ENCODE measurements at regions of chr6 and their contacts with region 1.

Region 1: DNA sequence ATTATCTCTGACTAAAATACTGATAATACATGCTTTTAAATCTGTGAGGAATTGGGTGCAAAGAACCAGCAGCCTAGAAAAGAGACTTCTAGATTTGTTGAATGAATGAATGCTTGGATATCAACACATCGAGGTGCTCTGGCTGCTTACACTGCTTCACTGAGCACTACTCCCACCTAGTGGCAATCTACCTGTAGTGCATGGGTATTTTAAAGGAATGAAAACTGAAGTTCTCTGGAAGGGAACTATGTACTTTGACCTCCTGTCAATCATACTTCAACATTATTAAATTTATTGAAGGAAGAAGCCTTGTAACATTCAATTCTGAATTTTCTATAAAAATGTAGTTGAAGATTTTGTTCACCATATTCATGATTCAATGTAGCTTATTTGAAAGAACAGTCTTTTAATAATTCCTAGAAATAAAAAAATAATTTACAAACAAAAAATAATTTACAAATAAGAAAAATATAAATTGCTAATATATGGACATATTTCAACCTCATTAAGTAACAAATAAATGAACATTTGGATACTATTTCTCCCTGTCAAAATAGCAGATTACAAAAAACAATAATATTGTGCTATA is 111.2 kb upstream of the MMS22L start:
- DNase-seq: peak; percentile 20
- ATAC-seq: peak; percentile 81
- H3K4me3 ChIP-seq: no peak overlapping the region
- H3K27ac ChIP-seq: no peak overlapping the region
- H3K4me1 ChIP-seq: no peaks in the 10 kb centered on the region
- H3K27me3 ChIP-seq: no peaks in the 10 kb centered on the region
- CTCF ChIP-seq: peak; percentile 82 to 89 (median 82)
- EP300 ChIP-seq: no peak
- POLR2A ChIP-seq: no peak
- RAD21 ChIP-seq: peak; percentile 96

Region 2: DNA sequence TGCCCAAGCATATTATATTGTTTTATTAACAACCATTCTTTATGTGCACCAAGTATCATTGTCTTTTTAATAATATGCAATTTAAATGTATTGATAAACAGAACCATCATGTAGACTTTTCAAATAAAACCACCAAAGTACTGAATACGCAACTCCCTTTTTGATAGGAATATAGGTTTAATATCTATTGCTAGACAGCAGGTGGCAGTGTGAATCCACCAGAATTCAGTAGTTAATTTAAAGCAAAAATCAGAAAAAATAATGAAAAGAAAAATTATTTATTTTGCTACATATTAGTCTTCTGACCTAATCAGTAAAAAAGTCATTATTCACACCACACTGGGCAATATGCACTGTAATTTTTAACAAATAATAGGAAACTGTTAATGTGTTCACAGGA is 326.0 kb before region 1 on chr6:
- CTCF ChIA-PET with region 1: interaction called, 10 read pairs
- POLR2A ChIA-PET with region 1: no interaction called
- RAD21 ChIA-PET with region 1: interaction called, 3 read pairs
- SMC1A ChIA-PET with region 1: interaction called, 4 read pairs
- in situ Hi-C with region 1: loop called (anchors 5 kb)
- intact Hi-C with region 1: loop called (anchors 1 kb)
- DNase-seq: no peak
- ATAC-seq: 0 out of 3 replicates have a peak, but pooled peaks have one; percentile 33
- H3K4me3 ChIP-seq: no peak overlapping the region
- H3K27ac ChIP-seq: no peak overlapping the region
- H3K4me1 ChIP-seq: no peaks in the 10 kb centered on the region
- H3K27me3 ChIP-seq: no peaks in the 10 kb centered on the region
- CTCF ChIP-seq: peak in 2 of 3 experiments; percentile 45 to 49; a peak in 4 of 6 replicates
- EP300 ChIP-seq: no peak
- POLR2A ChIP-seq: no peak
- RAD21 ChIP-seq: peak; percentile 64

Region 3: DNA sequence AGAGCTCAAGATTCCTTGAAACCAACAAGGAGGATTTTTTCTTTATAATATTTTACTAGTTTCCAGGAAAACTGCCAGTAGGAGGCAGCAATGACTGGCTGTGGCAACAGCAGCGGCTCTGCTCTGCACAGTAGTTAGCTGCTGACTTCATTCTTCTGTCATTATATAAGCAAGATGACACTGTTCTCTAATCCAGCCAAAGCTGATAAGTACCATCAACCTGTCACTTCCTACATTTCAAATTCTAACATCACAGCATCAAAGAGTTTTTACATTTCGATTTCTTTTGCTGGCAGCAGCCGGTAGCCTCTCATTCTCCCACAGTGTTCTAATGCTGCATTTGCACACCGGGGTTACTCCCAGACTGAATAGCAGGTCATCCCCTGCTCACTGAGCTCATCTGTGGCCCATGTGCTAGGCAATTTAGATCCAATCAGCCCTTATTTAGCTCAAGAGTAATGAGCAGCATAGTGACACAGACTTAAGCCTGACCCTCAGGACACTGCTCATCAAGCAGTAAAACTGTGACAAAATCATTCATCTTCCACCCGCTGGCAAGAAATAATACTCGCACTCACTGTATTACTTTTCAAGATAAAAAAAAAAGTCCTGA is 179.0 kb before region 1 on chr6:
- CTCF ChIA-PET with region 1: interaction called, 14 read pairs
- POLR2A ChIA-PET with region 1: no interaction called
- RAD21 ChIA-PET with region 1: interaction called, 9 read pairs
- SMC1A ChIA-PET with region 1: interaction called, 3 read pairs
- in situ Hi-C with region 1: no loop called
- intact Hi-C with region 1: no loop called
- DNase-seq: no peak
- ATAC-seq: peak; percentile 34; the same call in 1 of the 3 replicates
- H3K4me3 ChIP-seq: no peak overlapping the region
- H3K27ac ChIP-seq: no peak overlapping the region
- H3K4me1 ChIP-seq: no peaks in the 10 kb centered on the region
- H3K27me3 ChIP-seq: no peaks in the 10 kb centered on the region
- CTCF ChIP-seq: peak; percentile 9 to 31 (median 16); a peak in 4 of 6 replicates
- EP300 ChIP-seq: no peak
- POLR2A ChIP-seq: no peak
- RAD21 ChIP-seq: peak; percentile 55

Measured in GM12878 (cell line).